Left ventricle myocardium superior (tissue), 1 donor: ENCODE measurements at regions of chr2 and their contacts with region 1.

Region 1: GRCh38 chr2:43333656-43334144 is 107.3 kb upstream of the ZFP36L2 start:
- DNase-seq: no peak
- ATAC-seq: peak; percentile 64

Region 2: DNA sequence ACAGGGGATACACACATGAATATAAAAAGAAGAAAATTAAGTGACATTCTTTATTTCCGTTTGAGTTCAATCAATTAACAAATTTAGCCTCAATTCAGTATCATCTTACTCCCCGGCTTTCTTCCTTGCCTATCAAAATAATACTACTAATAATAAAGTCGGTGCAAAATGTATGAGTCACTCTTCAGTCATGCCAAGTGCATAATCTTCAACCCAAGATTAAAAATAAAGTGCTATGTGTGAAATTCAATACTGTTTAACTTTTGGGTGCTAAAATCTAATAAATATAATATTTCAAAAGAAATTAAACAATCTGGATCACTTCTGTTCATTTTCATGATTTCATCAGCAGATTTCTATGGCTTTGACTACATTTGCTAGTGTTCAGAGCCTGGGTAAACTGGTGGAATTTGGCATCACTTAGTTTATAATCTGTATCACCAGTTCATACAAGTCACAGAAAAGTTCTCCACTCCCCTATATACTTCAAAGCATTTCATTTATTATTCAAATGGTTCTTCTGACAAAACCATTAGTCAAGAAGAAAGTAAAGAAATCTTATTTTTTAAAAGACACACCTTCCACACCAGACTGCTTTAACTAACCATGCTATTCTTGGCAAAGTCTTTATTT is 78.5 kb after region 1 on chr2:
- intact Hi-C with region 1: loop called (anchors 5 kb)
- DNase-seq: no peak
- ATAC-seq: peak; percentile 63

Region 3: GRCh38 chr2:44596537-44597320 is 1263.0 kb after region 1 on chr2:
- intact Hi-C with region 1: no loop called
- DNase-seq: no peak
- ATAC-seq: no peak